A673 (cell line): ENCODE measurements at regions of chr18 and their contacts with region 1.

Region 1: DNA sequence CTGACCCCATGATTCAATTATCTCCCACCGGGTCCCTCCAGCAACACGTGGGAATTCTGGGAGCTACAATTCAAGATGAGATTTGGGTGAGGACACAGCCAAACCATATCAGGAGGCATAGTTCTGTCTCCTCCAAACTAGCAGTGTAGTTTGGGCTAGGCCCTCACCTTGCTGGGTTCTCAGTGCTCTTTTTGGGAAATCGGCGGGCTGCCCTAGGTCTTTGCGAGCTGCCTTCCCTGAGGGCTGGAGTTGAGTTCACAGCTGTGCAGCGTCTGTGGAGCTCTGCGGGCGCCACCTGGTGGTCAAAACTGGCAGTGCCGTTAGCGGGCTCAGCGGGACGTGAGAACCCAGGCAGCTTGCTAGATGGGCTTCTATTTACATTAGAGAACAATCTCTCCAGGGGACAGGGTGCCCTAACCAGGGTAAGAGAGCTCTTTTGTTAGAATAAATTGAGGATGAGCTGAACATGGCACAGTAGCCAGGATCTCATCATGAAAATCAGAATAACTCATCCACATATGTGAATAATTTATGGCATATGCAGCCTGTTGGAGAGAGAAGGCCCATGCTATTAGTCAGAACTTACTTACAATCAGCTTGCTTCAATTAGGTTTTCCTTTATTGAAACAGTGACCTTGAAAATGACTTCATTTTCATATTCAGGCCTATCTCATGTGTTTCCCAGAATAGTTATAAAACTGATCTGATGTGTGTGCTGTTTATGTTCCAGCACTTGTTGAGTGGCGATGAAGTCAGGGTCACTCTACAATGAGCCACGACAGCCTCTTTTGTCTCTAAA is 27.4 kb upstream of the YES1 start:
- DNase-seq: peak; percentile 93
- H3K4me3 ChIP-seq: no peak overlapping the region
- H3K27ac ChIP-seq: no peak overlapping the region
- H3K4me1 ChIP-seq: no peaks in the 10 kb centered on the region
- H3K27me3 ChIP-seq: no peaks in the 10 kb centered on the region
- CTCF ChIP-seq: peak; percentile 99

Region 2: DNA sequence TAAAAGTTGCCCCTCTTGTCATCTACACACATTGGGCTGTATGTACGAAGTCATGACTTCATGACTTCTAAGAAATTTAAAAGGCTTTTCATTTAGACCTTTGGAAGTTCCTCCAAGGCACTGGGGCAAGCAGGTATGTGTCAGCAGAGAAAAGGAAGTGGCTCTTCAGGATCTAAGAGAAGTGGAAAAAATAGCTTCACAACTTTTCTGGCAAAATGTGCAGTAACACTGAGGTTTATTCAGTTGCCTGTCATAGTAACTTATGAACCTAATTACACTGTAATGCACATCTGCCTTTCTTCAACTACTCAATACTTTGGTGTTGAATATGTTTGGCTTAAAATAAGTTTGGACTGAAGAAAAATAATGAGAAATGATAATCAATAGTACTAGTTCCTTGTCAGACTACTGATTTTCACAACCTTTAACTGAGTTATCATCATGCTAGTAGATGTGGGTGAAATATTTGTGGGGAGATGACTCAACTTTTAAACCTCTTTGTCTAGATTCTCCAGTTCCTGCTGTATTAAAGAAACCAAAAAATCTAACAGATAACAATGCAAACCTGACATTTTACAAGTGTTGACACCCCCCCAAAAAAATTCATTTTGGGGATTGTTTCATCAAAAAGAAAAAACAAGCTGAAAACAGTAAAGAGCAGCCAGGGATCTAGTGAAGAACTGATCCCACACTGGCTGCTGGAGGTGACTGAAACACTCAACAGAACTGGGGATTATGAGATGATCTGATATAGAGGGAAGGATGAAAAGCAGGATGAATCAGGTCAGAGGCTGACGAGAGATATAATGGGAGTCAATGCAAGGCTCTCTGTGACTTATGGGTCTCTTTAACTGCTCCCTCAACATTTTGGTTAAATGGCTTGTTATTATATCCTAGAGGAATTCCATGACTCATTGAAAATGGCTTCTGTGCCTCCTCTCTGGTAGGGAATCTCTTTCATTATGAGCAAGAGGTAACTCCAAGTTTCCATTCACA is 423.5 kb before region 1 on chr18:
- CTCF ChIA-PET with region 1: no interaction called
- POLR2A ChIA-PET with region 1: no interaction called
- intact Hi-C with region 1: no loop called
- DNase-seq: no peak
- H3K4me3 ChIP-seq: no peak overlapping the region
- H3K27ac ChIP-seq: no peak overlapping the region
- H3K4me1 ChIP-seq: no peaks in the 10 kb centered on the region
- H3K27me3 ChIP-seq: no peaks in the 10 kb centered on the region
- CTCF ChIP-seq: no peak

Region 3: GRCh38 chr18:499551-500408 is 339.6 kb before region 1 on chr18:
- CTCF ChIA-PET with region 1: no interaction called
- POLR2A ChIA-PET with region 1: no interaction called
- intact Hi-C with region 1: loop called (anchors 10 kb)
- DNase-seq: peak; percentile 52
- H3K4me3 ChIP-seq: peak overlapping the region; percentile 46
- H3K27ac ChIP-seq: no peak overlapping the region
- H3K4me1 ChIP-seq: peaks cover 10% of the 10 kb centered on the region
- H3K27me3 ChIP-seq: peaks cover 30% of the 10 kb centered on the region
- CTCF ChIP-seq: 0 out of 2 replicates have a peak, but pooled peaks have one; percentile 13

Region 4: DNA sequence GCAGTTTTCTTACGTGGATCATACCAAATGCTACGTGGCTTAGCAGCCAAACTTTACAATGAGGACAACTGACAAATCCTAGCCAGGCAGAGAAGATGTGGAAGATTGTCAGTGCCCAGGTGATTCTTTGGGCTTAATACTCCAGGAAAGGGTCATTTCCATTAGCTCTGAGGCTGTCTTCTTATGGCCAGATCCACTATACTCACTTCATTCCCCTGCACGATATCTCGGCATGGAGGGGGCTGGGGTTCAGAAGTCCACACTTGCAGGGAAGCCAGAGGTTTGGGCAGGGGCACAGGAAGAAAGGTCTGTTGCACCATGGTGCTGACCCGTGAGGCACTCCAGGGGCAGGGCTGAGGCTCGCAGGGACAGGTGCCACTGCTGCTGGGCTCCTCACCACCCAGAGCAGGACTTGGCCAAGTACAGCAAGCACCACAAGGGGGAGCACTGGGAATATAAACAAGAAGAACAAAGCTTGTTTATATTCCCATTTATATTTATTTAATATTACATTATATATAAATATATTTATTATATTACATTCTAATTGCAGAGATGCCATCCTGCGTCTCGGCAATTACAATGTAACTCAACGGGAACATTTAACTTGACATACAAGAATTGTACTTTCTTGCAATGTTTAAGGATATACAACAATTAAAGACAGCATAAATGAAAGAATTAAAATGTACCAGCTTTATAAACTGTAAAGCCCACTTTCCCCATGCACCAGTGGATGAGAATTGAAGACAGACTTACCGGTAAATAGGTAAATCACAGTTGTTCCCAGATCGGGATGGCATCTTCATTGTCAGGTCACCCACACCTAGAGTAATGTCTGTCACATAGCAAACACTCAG is 215.4 kb before region 1 on chr18:
- CTCF ChIA-PET with region 1: interaction called, 20 read pairs
- POLR2A ChIA-PET with region 1: no interaction called
- intact Hi-C with region 1: loop called (anchors 2 kb)
- DNase-seq: peak; percentile 72
- H3K4me3 ChIP-seq: no peak overlapping the region
- H3K27ac ChIP-seq: no peak overlapping the region
- H3K4me1 ChIP-seq: peaks cover 14% of the 10 kb centered on the region
- H3K27me3 ChIP-seq: no peaks in the 10 kb centered on the region
- CTCF ChIP-seq: peak; percentile 75

Region 5: GRCh38 chr18:712401-713134 is 126.9 kb before region 1 on chr18 and contains the start of gene ENOSF1:
- CTCF ChIA-PET with region 1: interaction called, 4 read pairs
- POLR2A ChIA-PET with region 1: no interaction called
- intact Hi-C with region 1: loop called (anchors 1 kb)
- DNase-seq: peak; percentile 88
- H3K4me3 ChIP-seq: peak within 1 kb of the TSS; percentile 61
- H3K27ac ChIP-seq: peak within 1 kb of the TSS; percentile 90
- H3K4me1 ChIP-seq: peaks cover 4% of the 10 kb centered on the region
- H3K27me3 ChIP-seq: no peaks in the 10 kb centered on the region
- CTCF ChIP-seq: peak; percentile 69
- total RNA-seq, gene ENOSF1: 39.2 and 48.0 TPM in 2 replicates

Region 6: GRCh38 chr18:741931-742512 is 97.4 kb before region 1 on chr18:
- CTCF ChIA-PET with region 1: interaction called, 5 read pairs
- POLR2A ChIA-PET with region 1: no interaction called
- intact Hi-C with region 1: loop called (anchors 1 kb)
- DNase-seq: peak; percentile 73
- H3K4me3 ChIP-seq: no peak overlapping the region
- H3K27ac ChIP-seq: no peak overlapping the region
- H3K4me1 ChIP-seq: peaks cover 14% of the 10 kb centered on the region
- H3K27me3 ChIP-seq: no peaks in the 10 kb centered on the region
- CTCF ChIP-seq: peak; percentile 80

Region 7: DNA sequence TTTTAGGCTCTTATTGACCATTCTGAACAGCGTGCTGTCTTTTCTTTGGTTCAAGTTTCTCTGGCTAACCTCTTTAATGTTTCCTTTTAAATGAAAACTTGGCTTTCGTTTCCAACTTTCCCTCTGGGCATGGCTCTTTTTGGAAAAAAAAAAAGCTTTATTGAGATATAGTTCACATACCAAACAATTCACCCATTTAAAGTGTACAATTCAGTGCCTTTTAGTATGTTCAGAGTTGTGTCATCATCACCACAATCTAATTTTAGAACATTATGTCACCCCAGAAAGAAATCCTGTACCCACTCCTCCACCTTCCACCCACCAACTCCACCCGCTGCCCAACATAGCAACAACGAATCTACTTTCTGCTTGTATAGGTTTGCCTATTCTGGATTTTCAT is 387.6 kb after region 1 on chr18:
- CTCF ChIA-PET with region 1: no interaction called
- POLR2A ChIA-PET with region 1: no interaction called
- intact Hi-C with region 1: no loop called
- DNase-seq: no peak
- H3K4me3 ChIP-seq: no peak overlapping the region
- H3K27ac ChIP-seq: no peak overlapping the region
- H3K4me1 ChIP-seq: no peaks in the 10 kb centered on the region
- H3K27me3 ChIP-seq: no peaks in the 10 kb centered on the region
- CTCF ChIP-seq: no peak